Prostate gland (tissue), 2 donors: ENCODE measurements at regions of chr1 and their contacts with region 1.

Region 1: DNA sequence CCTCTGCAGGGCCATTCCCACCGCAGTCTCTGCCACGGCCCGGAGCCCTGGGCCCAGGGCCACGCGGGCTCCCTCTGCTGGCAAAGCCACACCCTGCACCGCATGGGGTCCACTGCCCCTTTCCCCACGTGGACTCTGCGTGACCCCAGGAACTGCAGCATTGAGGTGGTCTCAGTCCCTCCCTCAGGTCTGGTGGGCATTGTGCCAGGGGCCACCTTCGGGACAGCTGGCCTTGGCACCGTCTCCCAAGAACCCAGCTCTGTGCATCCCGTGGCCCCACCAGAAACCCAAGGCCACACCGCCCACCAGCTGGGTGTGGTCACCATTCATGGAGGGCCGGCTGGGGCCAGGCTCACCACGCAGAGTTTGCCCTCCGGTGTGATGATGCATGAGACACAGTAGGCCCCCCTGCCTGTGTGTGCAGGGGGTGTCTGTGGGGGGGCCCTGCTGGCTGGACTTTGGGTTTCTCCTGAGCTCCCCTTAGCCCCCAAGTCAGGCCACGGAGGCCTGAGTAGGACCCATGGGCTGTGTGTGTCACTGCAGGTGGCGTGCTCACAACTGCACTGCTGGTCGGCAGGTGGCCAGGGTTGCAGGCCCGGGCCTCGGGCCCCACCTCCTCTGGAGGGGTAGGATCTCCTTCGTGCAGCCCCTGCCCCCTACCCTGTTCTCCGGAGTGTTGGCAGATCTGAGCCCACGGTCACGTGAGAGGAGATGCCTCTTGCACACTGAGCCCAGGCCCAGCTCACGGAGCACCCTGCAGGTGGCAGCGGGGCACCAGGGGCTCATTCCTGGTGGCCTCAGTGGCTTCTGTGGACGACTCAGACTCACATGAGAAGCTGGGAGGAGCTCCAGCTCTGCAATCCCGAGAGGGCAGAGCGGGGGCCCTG is 5.8 kb downstream of the VWA1 start:
- DNase-seq: no peak
- H3K4me3 ChIP-seq: no peak overlapping the region
- H3K27ac ChIP-seq: peak overlapping the region in 1 of 2 donors; percentile 0
- H3K4me1 ChIP-seq: peaks cover 13% of the 10 kb centered on the region
- H3K27me3 ChIP-seq: no peaks in the 10 kb centered on the region
- CTCF ChIP-seq: peak; percentile 74 to 91 (median 88)
- POLR2A ChIP-seq: no peak

Region 2: DNA sequence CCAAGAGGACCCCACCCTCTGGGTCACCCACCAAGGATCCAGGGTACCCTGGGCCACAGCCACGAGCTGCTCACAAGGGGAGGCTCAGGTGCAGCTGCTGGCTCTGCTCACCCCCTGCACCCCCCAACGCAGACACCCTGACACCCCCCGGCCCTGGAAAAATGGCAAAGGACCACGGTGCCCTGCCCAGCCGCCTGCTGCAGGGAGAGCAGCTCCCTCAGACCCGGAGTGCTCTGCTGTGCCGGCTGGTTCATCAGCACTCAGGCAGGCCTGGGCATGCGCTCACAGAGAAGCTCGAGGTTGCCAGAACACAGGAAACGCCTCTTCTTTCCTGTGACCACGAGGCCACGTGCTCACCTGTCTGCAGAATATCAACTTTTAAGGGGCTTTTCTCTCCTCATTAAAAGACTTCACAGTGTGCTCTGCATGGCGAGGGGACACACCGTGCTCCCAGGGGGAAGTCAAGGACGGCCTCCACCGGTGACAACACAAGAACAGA is 190.4 kb before region 1 on chr1:
- intact Hi-C with region 1: no loop called
- DNase-seq: no peak
- H3K4me3 ChIP-seq: no peak overlapping the region
- H3K27ac ChIP-seq: no peak overlapping the region
- H3K4me1 ChIP-seq: peaks cover 4% of the 10 kb centered on the region
- H3K27me3 ChIP-seq: peaks cover 5% of the 10 kb centered on the region
- CTCF ChIP-seq: no peak
- POLR2A ChIP-seq: no peak

Region 3: GRCh38 chr1:1406817-1407635 is 34.2 kb before region 1 on chr1 and contains the start of gene MRPL20:
- intact Hi-C with region 1: loop called (anchors 5 kb)
- DNase-seq: peak; percentile 91
- H3K4me3 ChIP-seq: peak within 1 kb of the TSS; percentile 96 to 99
- H3K27ac ChIP-seq: peak within 1 kb of the TSS; percentile 77 to 83
- H3K4me1 ChIP-seq: peaks cover 10% of the 10 kb centered on the region
- H3K27me3 ChIP-seq: no peaks in the 10 kb centered on the region
- CTCF ChIP-seq: peak in 1 of 4 experiments; percentile 18
- POLR2A ChIP-seq: peak; percentile 51
- total RNA-seq, gene MRPL20: 143 to 174 TPM